ENCODE measurements at regions of chr18 and their contacts with region 1.

Region 1: GRCh38 chr18:63320046-63320689 is 599 bp upstream of the BCL2 start:
- DNase-seq: peak; percentile 79 to 94
- ATAC-seq: peak; percentile 78 to 91 (median 85)
- H3K4me3 ChIP-seq: peak overlapping the region; percentile 35
- H3K4me3 Mint-ChIP-seq: peak overlapping the region; percentile 88
- H3K27ac ChIP-seq: peak overlapping the region; percentile 14
- H3K27ac Mint-ChIP-seq: peak overlapping the region; percentile 93 to 94
- H3K4me1 ChIP-seq: peaks cover 22% of the 10 kb centered on the region
- H3K4me1 Mint-ChIP-seq: peaks cover 53 to 57% of the 10 kb centered on the region in 2 donors
- H3K27me3 ChIP-seq: no peaks in the 10 kb centered on the region
- H3K27me3 Mint-ChIP-seq: no peaks in the 10 kb centered on the region
- CTCF ChIP-seq: no peak

Region 2: DNA sequence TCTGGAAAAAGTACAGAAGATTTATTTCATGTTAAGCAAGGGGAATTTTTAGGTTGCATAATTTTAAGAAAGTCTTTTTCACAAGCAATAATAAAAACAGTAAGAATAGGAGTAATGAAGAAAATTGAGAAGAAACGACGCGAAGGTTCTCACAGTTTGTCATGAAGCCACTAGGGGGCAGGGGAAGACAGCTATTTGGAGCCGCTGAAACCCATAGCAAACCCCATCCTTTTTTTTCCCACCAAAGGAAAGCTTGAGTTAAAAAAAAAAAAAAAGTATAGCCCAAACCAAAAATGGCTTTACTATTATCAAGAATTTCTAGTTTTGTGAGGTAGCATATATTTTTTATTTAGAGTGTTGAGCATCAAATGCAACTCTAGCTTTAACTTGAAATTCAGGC is 303.9 kb before region 1 on chr18:
- intact Hi-C with region 1: loop called (anchors 1 kb)
- DNase-seq: peak in 1 of 2 donors; percentile 83
- ATAC-seq: peak; percentile 64 to 88 (median 82)
- H3K4me3 ChIP-seq: no peak overlapping the region
- H3K4me3 Mint-ChIP-seq: no peak overlapping the region
- H3K27ac ChIP-seq: no peak overlapping the region
- H3K27ac Mint-ChIP-seq: no peak overlapping the region
- H3K4me1 ChIP-seq: no peaks in the 10 kb centered on the region
- H3K4me1 Mint-ChIP-seq: no peaks in the 10 kb centered on the region
- H3K27me3 ChIP-seq: no peaks in the 10 kb centered on the region
- H3K27me3 Mint-ChIP-seq: peaks cover 16 to 33% of the 10 kb centered on the region in 2 donors
- CTCF ChIP-seq: peak; percentile 88

Region 3: DNA sequence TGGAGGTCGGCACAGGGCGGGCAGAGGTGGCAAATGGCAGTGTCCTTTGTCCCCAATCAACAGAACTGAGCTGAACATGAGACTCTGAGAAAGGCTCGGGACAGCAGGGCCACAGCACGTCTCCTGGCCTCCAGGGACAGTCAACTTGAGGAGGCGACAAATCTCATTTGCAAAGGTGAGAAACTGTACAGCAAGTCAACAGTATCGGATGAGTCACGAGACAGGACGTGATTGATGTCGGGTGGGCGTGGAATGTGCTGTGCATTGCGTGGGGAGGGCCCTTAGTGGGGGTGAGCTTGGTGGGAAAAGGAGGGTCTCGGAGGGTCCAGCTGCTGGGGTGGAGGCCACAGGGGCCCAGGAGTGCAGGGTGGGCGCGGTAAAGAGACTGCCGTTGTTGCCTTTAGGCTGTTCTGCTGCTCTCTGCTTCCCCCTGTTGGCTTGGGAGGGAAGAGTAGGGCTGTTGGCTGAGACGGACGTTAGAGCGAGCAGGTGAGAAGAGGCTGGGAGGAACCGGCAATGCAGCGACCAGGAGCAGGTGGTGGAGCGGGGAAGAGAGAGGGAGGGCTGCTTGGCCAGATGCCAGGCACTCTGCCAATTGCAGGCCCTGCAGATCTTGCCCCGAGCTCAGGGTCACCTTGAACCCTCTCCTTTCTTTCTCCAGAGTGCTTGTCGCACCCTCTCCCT is 164.9 kb before region 1 on chr18:
- intact Hi-C with region 1: loop called (anchors 2 kb)
- DNase-seq: peak; percentile 77 to 90
- ATAC-seq: peak; percentile 87 to 93 (median 87)
- H3K4me3 ChIP-seq: peak overlapping the region; percentile 44
- H3K4me3 Mint-ChIP-seq: peak overlapping the region; percentile 82
- H3K27ac ChIP-seq: peak overlapping the region; percentile 82
- H3K27ac Mint-ChIP-seq: peak overlapping the region; percentile 95 to 96
- H3K4me1 ChIP-seq: peaks cover 74% of the 10 kb centered on the region
- H3K4me1 Mint-ChIP-seq: peaks cover 58 to 69% of the 10 kb centered on the region in 2 donors
- H3K27me3 ChIP-seq: no peaks in the 10 kb centered on the region
- H3K27me3 Mint-ChIP-seq: no peaks in the 10 kb centered on the region
- CTCF ChIP-seq: peak; percentile 92

Region 4: GRCh38 chr18:63216516-63217311 is 103.5 kb before region 1 on chr18:
- intact Hi-C with region 1: loop called (anchors 5 kb)
- DNase-seq: peak in 1 of 2 donors; percentile 61
- ATAC-seq: peak; percentile 55 to 58 (median 56)
- H3K4me3 ChIP-seq: no peak overlapping the region
- H3K4me3 Mint-ChIP-seq: peak overlapping the region; percentile 80
- H3K27ac ChIP-seq: peak overlapping the region; percentile 45
- H3K27ac Mint-ChIP-seq: peak overlapping the region; percentile 78 to 79
- H3K4me1 ChIP-seq: peaks cover 42% of the 10 kb centered on the region
- H3K4me1 Mint-ChIP-seq: peaks cover 91 to 92% of the 10 kb centered on the region in 2 donors
- H3K27me3 ChIP-seq: no peaks in the 10 kb centered on the region
- H3K27me3 Mint-ChIP-seq: peaks cover 0 to 2% of the 10 kb centered on the region in 2 donors
- CTCF ChIP-seq: no peak

Region 5: GRCh38 chr18:63422087-63422809 is 102.1 kb after region 1 on chr18 and contains the start of gene VPS4B:
- intact Hi-C with region 1: loop called (anchors 1 kb)
- DNase-seq: peak; percentile 100
- ATAC-seq: peak; percentile 93 to 98 (median 94)
- H3K4me3 ChIP-seq: peak within 1 kb of the TSS; percentile 96
- H3K4me3 Mint-ChIP-seq: peak within 1 kb of the TSS; percentile 96
- H3K27ac ChIP-seq: peak within 1 kb of the TSS; percentile 85
- H3K27ac Mint-ChIP-seq: peak within 1 kb of the TSS; percentile 97
- H3K4me1 ChIP-seq: peaks cover 13% of the 10 kb centered on the region
- H3K4me1 Mint-ChIP-seq: peaks cover 19 to 28% of the 10 kb centered on the region in 2 donors
- H3K27me3 ChIP-seq: no peaks in the 10 kb centered on the region
- H3K27me3 Mint-ChIP-seq: peaks cover 3 to 5% of the 10 kb centered on the region in 2 donors
- CTCF ChIP-seq: no peak
- total RNA-seq, gene VPS4B: 101 to 128 (median 107) TPM

Measured in natural killer cell (primary cell).